ENCODE measurements at regions of chr5 and their contacts with region 1.

Region 1: DNA sequence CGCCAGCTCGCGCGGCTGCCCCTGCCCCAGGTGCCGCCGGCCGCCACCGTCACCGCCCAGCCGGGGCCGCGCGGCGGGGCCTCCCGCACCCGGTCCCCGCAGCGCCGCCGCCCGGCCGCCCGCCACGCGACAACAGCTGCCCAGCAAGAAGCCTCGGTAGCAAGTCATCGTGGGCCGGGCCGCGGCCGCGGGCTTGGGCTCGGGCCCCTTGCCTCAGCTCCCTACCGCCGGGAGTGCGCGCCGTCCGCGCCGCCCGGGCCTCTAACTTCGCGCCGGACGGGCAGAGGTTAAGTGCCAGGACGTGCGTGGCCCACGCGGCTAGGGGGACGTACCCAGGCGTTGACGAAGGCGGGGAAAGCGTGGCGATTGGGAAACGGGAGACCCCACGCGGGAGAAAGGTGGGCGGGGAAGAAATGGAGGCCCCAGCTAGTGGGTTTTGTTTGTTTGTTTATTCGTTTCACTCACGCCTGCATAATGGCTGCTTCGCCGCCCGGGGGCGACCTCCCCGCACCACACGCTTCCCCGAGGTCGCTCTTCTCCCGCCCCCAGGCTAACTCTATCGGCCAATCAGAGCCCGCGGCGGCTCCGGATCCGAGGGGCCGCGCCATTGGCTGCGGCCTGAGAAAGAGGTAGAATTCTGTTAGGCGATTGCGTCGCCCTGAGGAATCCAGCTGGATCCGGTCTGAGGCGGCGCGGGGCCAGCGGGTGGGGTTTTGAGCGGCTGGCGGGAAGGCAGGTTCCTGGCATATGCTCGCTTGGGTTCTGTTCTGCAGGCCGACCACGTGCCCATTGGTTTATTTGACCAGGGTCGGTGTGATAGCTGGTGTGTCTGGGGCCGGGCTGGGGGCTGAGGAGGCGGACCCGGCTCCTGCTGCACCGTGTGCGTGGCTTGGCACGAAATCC is at the start of gene NADK2:
- DNase-seq: peak; percentile 95 to 97
- ATAC-seq: peak; percentile 94 to 95 (median 94)
- H3K4me3 ChIP-seq: peak within 1 kb of the TSS; percentile 91
- H3K27ac ChIP-seq: peak within 1 kb of the TSS; percentile 96
- H3K4me1 ChIP-seq: peaks cover 40% of the 10 kb centered on the region
- H3K27me3 ChIP-seq: no peaks in the 10 kb centered on the region
- CTCF ChIP-seq: peak; percentile 69
- total RNA-seq, gene NADK2: 30.8 to 46.6 (median 35.2) TPM

Region 2: GRCh38 chr5:36285837-36286615 is 44.1 kb after region 1 on chr5:
- intact Hi-C with region 1: no loop called
- DNase-seq: no peak
- ATAC-seq: no peak
- H3K4me3 ChIP-seq: no peak overlapping the region
- H3K27ac ChIP-seq: no peak overlapping the region
- H3K4me1 ChIP-seq: no peaks in the 10 kb centered on the region
- H3K27me3 ChIP-seq: no peaks in the 10 kb centered on the region
- CTCF ChIP-seq: no peak

Region 3: DNA sequence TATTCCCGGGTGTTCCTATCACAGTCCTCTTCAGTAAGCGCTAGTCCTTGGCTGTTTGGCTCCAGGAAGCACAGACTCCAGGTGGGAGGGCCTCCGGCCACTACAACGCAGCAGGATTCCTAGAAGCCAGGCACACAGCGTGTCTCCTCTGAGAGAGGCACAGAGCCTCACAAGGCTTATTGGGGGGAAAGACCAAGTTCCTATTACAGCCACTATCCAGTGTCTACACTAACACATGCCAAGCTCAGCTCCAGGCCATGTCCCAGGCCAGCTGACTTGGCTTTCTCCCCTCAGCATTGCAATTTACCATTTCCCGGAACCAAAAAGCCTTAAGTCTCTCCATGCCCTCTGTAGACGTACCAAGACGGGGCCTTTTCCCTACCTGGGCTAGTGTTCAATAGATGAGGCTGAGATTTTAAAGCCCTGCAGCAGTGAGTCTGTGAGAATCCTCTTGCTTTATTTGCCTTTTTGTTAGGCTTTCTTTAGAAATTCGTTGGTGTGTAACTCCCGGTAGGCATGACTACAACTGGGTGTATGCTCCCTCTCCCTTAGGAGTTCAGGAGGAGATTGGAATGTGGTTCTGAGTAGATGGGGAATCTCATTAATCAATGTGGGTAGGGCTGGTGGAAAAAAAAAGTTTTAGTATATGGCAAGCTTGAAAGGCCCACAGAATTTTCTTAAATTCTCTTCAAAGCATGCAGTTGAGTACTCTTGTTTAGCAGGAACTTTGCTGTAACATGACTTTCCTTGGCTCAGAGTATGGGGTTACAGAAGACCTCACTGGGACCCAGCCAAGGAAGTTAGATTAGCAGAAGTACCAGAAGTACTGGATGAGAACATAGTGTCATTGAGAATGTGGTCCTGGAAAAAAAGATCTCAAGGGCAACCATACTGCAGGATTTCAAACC is 280.2 kb after region 1 on chr5:
- intact Hi-C with region 1: no loop called
- DNase-seq: no peak
- ATAC-seq: peak; percentile 49 to 86 (median 74)
- H3K4me3 ChIP-seq: no peak overlapping the region
- H3K27ac ChIP-seq: no peak overlapping the region
- H3K4me1 ChIP-seq: no peaks in the 10 kb centered on the region
- H3K27me3 ChIP-seq: no peaks in the 10 kb centered on the region
- CTCF ChIP-seq: no peak

Region 4: GRCh38 chr5:36875790-36876388 is 634.0 kb after region 1 on chr5:
- intact Hi-C with region 1: loop called in 1 of 2 experiments (anchors 10 kb)
- DNase-seq: peak; percentile 81 to 89
- ATAC-seq: peak; percentile 82 to 85 (median 84)
- H3K4me3 ChIP-seq: peak overlapping the region; percentile 86
- H3K27ac ChIP-seq: peak overlapping the region; percentile 96
- H3K4me1 ChIP-seq: peaks cover 38% of the 10 kb centered on the region
- H3K27me3 ChIP-seq: no peaks in the 10 kb centered on the region
- CTCF ChIP-seq: peak; percentile 53

Measured in psoas muscle (tissue), 8 donors.